ENCODE measurements at regions of chr11 and their contacts with region 1.

Region 1: DNA sequence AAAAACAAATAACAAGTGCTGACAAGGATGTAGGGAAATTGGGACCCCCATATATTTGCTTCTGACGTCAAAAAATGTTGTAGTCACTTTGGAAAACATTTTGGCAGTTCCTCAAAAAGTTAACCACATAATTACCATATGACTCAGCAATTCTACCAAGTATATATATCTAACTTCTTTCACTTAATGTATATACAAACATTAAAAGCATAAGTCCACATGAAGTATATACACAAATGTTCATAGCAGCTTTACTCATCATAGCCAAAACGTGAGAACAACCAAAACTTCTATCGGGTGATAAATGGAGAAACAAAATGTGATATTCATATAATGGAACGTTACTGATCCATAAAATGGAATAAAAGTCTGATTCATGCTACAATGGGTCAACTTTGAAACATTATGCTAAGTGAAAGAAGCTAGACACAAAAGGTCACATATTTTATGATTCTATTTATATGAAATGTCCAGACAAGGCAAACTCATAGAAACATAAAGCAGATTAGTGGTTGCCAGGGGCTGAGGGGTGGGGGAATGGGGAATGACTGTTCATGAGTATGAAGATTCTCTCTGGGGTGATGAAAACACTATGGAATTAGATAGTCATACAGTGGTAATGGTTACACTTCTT is 48.7 kb upstream of the TEAD1 start:
- DNase-seq: no peak
- H3K4me3 ChIP-seq: no peak overlapping the region
- H3K27ac ChIP-seq: no peak overlapping the region
- H3K4me1 ChIP-seq: no peaks in the 10 kb centered on the region
- H3K27me3 ChIP-seq: no peaks in the 10 kb centered on the region
- CTCF ChIP-seq: no peak
- POLR2A ChIP-seq: no peak

Region 2: DNA sequence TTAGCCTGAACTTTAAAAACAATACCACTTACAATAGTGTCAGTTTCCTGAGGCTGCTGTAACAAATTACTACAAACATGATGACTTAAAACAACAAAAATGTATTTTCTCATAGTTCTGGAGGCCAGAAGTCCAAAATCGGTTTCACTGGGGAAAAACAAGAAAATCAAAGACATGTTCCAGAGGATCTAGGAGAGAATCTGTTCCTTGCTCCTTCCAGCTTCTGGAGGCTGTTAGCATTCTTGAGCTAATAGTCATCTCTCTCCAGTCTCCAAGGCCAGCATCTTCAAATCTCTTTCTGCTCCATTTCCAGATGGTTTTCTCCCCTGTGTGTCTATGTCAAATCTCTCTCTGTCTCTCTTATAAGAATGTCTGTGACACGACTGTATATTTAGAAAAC is 19.0 kb before region 1 on chr11:
- intact Hi-C with region 1: loop called (anchors 1 kb)
- DNase-seq: no peak
- H3K4me3 ChIP-seq: no peak overlapping the region
- H3K27ac ChIP-seq: no peak overlapping the region
- H3K4me1 ChIP-seq: no peaks in the 10 kb centered on the region
- H3K27me3 ChIP-seq: no peaks in the 10 kb centered on the region
- CTCF ChIP-seq: no peak
- POLR2A ChIP-seq: no peak

Region 3: DNA sequence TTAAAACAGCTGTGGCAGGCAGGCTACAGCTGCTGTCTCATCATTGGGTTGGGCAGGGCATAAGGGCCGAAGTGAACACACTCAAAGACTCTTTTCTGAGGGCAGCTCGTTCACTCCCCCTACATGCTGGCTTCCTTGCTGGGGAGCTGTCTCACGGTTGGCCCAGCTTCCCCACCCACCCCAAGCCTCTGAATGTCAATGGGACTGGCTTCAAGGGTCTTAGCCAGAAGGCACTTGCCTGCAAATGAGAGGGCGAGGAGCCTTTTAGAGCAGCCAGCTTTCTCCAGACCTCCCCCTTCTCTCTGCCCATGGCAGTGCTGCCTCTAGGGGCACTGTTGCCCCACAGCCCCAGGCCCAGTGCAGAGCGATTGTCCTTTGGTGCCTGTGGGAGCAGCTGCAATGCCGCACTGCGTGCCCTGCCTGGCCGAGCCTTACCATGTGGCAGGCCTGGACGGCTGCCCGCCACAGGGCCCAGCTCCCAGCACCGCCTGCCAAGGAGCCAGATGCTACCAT is 288.9 kb after region 1 on chr11:
- intact Hi-C with region 1: no loop called
- DNase-seq: peak; percentile 25
- H3K4me3 ChIP-seq: no peak overlapping the region
- H3K27ac ChIP-seq: no peak overlapping the region
- H3K4me1 ChIP-seq: no peaks in the 10 kb centered on the region
- H3K27me3 ChIP-seq: no peaks in the 10 kb centered on the region
- CTCF ChIP-seq: peak in 2 of 4 experiments; percentile 10 to 45
- POLR2A ChIP-seq: no peak